ENCODE measurements at regions of chr6 and their contacts with region 1.

Region 1: DNA sequence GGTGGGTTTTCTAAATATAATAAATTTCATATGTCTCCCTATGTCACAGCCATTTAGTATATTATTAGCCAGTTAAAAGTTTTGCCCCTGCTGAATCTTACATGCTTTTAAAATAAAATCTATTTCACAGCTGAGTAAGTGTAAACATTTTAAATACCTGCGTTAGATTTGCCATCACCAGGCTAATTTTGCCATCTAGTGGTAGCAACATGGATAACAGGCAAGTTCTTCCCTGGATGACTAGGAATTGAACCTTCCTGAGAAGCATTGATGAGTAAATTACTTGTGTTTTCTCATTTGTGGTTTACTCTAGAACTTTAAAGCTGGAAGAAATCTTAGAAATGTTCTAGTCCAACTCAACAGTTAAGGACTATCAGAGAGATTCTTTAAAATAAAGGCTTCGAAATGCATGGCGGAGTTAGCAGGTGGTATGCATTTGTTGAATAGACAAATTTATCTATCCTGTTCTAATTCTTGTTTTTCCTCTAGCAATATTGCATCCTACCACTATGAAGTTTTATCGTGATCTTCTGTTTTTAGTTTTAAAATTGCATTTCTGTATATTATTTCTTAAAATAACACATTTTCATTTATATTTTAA is 2.6 kb downstream of the PRSS35 start:
- DNase-seq: peak in 2 of 10 donors; percentile 13 to 29
- H3K4me3 ChIP-seq: no peak overlapping the region
- H3K27ac ChIP-seq: no peak overlapping the region
- H3K27me3 ChIP-seq: no peaks in the 10 kb centered on the region
- CTCF ChIP-seq: peak; percentile 72 to 97 (median 89)

Region 2: GRCh38 chr6:83221889-83222479 is 293.0 kb before region 1 on chr6:
- intact Hi-C with region 1: loop called (anchors 1 kb)
- DNase-seq: no peak
- H3K4me3 ChIP-seq: no peak overlapping the region
- H3K27ac ChIP-seq: no peak overlapping the region
- H3K27me3 ChIP-seq: no peaks in the 10 kb centered on the region
- CTCF ChIP-seq: peak; percentile 30 to 84 (median 64)

Region 3: DNA sequence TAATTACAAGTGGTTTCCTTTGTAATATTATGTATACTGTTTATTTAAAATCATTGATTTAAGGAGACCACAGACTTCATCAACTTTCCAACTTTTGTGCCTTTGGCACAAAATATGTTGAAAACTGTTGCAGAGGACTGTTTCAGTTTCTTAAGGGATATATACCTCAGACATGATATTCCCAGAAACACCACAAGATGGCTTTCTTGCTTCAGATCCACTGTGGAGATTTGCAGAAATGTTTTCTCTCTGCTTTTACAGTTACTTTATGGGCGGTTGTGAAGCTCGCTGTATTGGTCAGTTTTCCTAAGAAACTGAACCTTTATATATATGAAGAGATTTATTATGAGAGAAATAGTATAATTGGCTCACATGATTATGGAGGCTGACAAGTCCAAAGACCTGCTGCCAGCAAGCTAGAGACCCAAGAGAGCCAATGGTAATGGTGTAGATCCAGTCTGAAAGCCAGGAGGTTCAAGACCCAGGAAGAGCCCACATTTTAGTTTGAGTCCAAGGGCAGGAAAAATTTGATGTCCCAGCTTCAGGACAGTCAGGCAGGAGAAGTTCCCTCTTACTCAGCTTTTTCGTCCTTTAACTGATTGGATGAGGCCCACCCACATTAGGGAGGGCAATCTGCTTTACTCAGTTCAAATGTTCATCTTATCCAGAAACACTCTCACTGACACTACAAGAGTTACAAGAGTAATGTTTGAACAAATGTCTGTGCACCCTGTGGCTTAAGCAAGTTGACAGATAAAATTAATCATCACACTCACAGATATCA is 96.9 kb before region 1 on chr6:
- intact Hi-C with region 1: loop called (anchors 2 to 5 kb)
- DNase-seq: no peak
- H3K4me3 ChIP-seq: no peak overlapping the region
- H3K27ac ChIP-seq: no peak overlapping the region
- H3K27me3 ChIP-seq: no peaks in the 10 kb centered on the region
- CTCF ChIP-seq: peak in 55 of 56 donors; percentile 45 to 80 (median 65)

Region 4: GRCh38 chr6:83424392-83425018 is 90.5 kb before region 1 on chr6:
- intact Hi-C with region 1: loop called (anchors 2 to 5 kb)
- DNase-seq: no peak
- H3K4me3 ChIP-seq: no peak overlapping the region
- H3K27ac ChIP-seq: no peak overlapping the region
- H3K27me3 ChIP-seq: no peaks in the 10 kb centered on the region
- CTCF ChIP-seq: no peak